ENCODE measurements at regions of chr12 and their contacts with region 1.

Region 1: DNA sequence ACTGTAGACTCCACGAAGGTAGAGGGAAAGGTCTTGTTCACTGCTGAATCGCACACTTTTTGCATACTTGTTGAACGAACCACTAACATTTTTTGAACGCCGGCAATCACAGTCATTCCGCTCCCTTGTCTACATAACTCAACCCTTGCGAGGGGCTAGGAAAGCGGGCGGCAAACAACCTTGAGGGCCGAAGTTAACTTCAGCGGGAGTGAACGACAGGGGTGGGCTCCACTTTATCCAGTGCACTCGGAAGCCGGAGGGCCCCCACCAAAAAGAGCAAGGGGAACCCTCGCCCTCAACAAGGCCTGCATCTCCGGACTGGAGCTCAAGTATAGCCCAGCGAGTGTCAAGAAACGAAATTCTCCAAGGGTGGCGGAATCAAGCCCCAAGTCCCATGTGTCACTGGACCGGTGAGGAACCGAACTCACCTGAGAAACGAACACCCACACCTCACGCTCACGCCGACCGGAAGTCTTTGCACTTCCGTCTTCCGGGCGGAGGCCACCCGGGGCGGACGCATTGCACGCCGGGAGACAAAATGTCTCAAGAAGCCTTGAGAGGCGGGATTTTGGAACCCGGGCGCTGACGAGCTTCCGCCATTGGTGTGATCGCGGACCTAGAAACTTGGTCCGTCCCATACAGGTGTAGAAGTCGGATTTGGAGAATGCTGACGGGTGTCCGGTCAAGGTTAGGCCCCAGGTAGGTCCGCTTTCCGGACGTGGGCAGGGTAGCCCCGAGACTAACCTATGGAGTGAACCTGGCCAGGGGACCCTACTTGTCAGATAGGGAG is at the start of gene LLPH:
- DNase-seq: peak; percentile 95
- ATAC-seq: peak; percentile 95
- H3K4me3 Mint-ChIP-seq: peak within 1 kb of the TSS; percentile 99
- H3K27ac Mint-ChIP-seq: peak within 1 kb of the TSS; percentile 96
- H3K4me1 Mint-ChIP-seq: peaks cover 46% of the 10 kb centered on the region
- H3K27me3 Mint-ChIP-seq: no peaks in the 10 kb centered on the region
- total RNA-seq, gene LLPH: 33.1 to 36.5 TPM

Region 2: GRCh38 chr12:66144791-66145754 is 14.6 kb after region 1 on chr12:
- CTCF ChIA-PET with region 1: interaction called, 21 read pairs
- POLR2A ChIA-PET with region 1: no interaction called
- intact Hi-C with region 1: no loop called
- DNase-seq: peak; percentile 8
- ATAC-seq: peak; percentile 75
- H3K4me3 Mint-ChIP-seq: no peak overlapping the region
- H3K27ac Mint-ChIP-seq: peak overlapping the region; percentile 61
- H3K4me1 Mint-ChIP-seq: peaks cover 16% of the 10 kb centered on the region
- H3K27me3 Mint-ChIP-seq: no peaks in the 10 kb centered on the region

Region 3: GRCh38 chr12:66169221-66170170 is 39.0 kb after region 1 on chr12 and contains the start of gene TMBIM4:
- CTCF ChIA-PET with region 1: interaction called, 6 read pairs
- POLR2A ChIA-PET with region 1: interaction called, 14 read pairs
- intact Hi-C with region 1: loop called (anchors 1 kb)
- DNase-seq: peak; percentile 93
- ATAC-seq: peak; percentile 86
- H3K4me3 Mint-ChIP-seq: peak within 1 kb of the TSS; percentile 86
- H3K27ac Mint-ChIP-seq: peak within 1 kb of the TSS; percentile 99
- H3K4me1 Mint-ChIP-seq: peaks cover 41% of the 10 kb centered on the region
- H3K27me3 Mint-ChIP-seq: no peaks in the 10 kb centered on the region
- total RNA-seq, gene TMBIM4: 41.4 to 44.6 TPM

Region 4: DNA sequence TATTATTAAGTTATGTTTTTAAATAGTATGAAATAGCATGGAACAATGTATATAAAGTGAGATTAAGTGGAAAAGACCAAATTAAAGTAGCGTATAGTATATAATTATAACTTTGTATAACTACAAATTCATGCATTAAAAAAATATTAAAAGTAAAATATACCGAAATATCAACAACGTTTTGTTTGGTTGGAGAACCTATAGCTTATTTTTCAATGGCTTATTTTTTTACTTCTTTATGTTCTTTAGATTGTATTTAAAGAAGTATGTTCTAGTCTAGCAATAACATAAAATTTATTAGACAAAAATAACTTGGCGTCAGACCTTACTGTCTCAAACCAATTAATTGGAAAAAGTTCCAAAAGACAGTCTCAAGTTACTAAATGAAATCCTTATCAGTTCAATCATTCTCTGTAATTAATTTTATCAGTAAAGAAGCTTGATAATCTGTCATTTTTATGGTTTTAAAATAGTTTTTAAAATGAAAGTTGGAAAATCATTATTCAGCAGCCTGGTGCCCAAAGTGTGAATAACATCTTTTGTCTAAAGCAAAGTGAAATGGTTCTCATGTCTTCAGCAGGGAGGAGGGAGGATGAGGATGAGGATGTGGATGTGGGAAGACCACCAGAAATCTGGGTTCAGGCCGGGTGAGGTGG is 105.3 kb after region 1 on chr12:
- CTCF ChIA-PET with region 1: no interaction called
- POLR2A ChIA-PET with region 1: no interaction called
- intact Hi-C with region 1: loop called in 1 of 2 experiments (anchors 5 kb)
- DNase-seq: no peak
- ATAC-seq: no peak
- H3K4me3 Mint-ChIP-seq: peak overlapping the region; percentile 42
- H3K27ac Mint-ChIP-seq: no peak overlapping the region
- H3K4me1 Mint-ChIP-seq: peaks cover 3% of the 10 kb centered on the region
- H3K27me3 Mint-ChIP-seq: peaks cover 23% of the 10 kb centered on the region